Mammary epithelial cell (primary cell): ENCODE measurements at regions of chr1 and their contacts with region 1.

Region 1: GRCh38 chr1:114511032-114511785 is at the start of gene TRIM33:
- DNase-seq: peak; percentile 93
- H3K4me3 ChIP-seq: peak within 1 kb of the TSS; percentile 99
- H3K27ac ChIP-seq: peak within 1 kb of the TSS; percentile 82
- H3K4me1 ChIP-seq: peaks cover 14% of the 10 kb centered on the region
- H3K27me3 ChIP-seq: no peaks in the 10 kb centered on the region
- CTCF ChIP-seq: no peak
- total RNA-seq, gene TRIM33: 32.8 to 43.8 TPM

Region 2: GRCh38 chr1:114446198-114446597 is 65.0 kb before region 1 on chr1:
- CTCF ChIA-PET with region 1: no interaction called
- dilution Hi-C with region 1: no loop called
- in situ Hi-C with region 1: no loop called
- intact Hi-C with region 1: no loop called
- DNase-seq: no peak
- H3K4me3 ChIP-seq: no peak overlapping the region
- H3K27ac ChIP-seq: no peak overlapping the region
- H3K4me1 ChIP-seq: no peaks in the 10 kb centered on the region
- H3K27me3 ChIP-seq: no peaks in the 10 kb centered on the region
- CTCF ChIP-seq: no peak

Region 3: DNA sequence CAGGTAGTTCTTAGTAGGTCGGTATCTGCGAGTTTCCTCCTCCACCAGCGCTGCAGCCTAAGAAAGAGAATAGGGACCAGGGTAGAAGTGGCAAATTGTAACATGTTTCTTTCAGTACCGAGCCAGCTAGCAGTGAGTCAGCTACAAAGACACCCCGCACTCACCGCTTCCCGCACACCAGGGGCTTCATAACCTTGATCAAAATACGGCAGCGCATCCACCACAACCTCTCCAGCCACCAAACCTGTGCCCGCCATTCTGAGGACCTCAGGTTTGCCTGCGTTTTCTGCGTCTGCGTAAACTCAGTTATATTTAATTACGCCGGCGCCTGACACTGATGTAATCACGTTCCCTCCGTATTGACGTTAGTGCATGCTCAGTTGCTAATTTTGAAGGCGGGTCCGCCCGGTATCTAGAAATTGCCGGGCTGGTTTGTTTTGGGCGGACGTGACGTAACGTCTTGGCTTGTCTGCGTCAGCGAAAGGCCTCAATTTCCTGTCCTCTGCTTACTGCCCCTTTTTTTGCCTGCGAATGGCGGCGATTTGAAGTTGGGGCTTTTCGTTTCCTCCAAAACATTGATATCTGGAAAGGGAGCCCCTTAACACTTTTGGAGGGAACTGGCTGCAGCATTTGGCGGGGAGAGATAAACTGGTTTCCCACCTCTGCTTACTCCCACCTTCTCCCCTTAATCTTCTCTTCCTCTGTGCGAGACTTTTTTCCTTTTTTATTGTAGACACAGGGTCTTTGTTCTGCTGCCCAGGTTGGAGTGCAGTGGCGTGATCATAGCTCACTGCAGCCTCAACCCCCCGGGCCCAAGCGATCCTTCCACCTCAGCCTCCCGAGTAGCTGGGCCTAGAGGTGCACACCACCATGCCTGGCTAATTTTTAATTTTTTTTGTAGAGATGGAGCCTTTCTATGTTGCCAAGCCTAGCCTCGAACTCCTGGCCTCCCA is 70.4 kb after region 1 on chr1 and contains the start of gene BCAS2:
- CTCF ChIA-PET with region 1: no interaction called
- dilution Hi-C with region 1: no loop called
- in situ Hi-C with region 1: no loop called
- intact Hi-C with region 1: loop called (anchors 1 kb)
- DNase-seq: peak; percentile 96
- H3K4me3 ChIP-seq: peak within 1 kb of the TSS; percentile 63 to 95 (median 90)
- H3K27ac ChIP-seq: peak within 1 kb of the TSS; percentile 96
- H3K4me1 ChIP-seq: peaks cover 7% of the 10 kb centered on the region
- H3K27me3 ChIP-seq: no peaks in the 10 kb centered on the region
- CTCF ChIP-seq: no peak
- total RNA-seq, gene BCAS2: 30.2 to 46.5 TPM